WTC11 (cell line): ENCODE measurements at regions of chr22 and their contacts with region 1.

Region 1: GRCh38 chr22:19909350-19910179 is 32.0 kb upstream of the COMT start:
- DNase-seq: peak; percentile 90
- ATAC-seq: peak; percentile 87
- H3K4me3 Mint-ChIP-seq: no peak overlapping the region
- H3K27ac Mint-ChIP-seq: no peak overlapping the region; the same call in 1 of the 2 replicates
- H3K4me1 Mint-ChIP-seq: no peaks in the 10 kb centered on the region; the same call in 1 of the 2 replicates
- H3K27me3 Mint-ChIP-seq: no peaks in the 10 kb centered on the region
- CTCF ChIP-seq: peak; percentile 80

Region 2: DNA sequence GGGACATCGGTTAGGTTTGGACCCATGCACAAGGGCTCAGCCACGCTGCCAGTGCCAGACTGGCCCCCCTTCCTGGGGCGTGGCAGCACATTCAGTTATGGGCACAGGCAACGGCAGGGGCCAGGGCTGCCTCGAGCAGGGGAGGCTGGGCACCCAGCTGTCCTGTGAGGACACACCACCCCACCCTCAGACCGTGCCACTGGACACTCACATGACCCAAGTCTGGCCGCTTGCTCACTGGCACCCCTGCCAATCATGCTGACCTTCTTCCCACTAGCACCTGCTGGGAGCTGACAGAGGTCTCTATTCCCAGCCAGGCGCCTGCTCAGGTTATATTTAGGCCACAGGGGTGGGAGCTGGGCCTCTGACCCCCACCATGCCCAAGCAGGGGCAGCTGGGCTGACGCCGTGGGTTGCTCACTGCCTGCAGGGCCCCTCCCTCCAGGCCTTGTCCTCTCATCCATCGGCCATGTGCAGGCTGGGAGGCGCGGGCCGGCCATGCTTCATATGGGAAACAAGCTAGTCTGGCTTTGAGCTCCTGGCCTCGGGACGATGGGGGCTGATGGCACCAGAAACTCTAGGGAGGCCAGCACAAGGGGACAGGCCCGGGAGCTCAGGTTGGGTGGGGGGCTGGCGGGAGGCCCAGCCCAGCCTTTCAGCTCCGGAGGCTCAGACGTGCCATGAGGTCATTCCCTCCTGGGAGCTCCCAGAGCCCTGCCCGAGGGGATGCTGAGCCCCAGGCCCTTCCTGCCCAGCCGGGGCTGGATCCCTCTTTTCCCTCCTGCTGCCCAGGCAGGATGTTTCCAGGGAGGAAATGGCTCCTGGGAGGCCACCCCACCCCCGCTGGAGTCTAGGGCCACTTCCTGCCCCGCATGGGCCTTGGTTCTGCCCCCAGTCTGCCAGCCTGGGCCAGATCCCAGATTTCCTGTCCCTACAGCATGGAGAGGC is 164.1 kb before region 1 on chr22:
- CTCF ChIA-PET with region 1: interaction called, 14 read pairs
- POLR2A ChIA-PET with region 1: no interaction called
- DNase-seq: no peak
- ATAC-seq: peak; percentile 25; the same call in 1 of the 2 replicates
- H3K4me3 Mint-ChIP-seq: no peak overlapping the region
- H3K27ac Mint-ChIP-seq: no peak overlapping the region
- H3K4me1 Mint-ChIP-seq: 0 out of 2 replicates have a peak, but pooled peaks cover 2% of the 10 kb centered on the region
- H3K27me3 Mint-ChIP-seq: no peaks in the 10 kb centered on the region; the same call in 1 of the 2 replicates
- CTCF ChIP-seq: no peak

Region 3: DNA sequence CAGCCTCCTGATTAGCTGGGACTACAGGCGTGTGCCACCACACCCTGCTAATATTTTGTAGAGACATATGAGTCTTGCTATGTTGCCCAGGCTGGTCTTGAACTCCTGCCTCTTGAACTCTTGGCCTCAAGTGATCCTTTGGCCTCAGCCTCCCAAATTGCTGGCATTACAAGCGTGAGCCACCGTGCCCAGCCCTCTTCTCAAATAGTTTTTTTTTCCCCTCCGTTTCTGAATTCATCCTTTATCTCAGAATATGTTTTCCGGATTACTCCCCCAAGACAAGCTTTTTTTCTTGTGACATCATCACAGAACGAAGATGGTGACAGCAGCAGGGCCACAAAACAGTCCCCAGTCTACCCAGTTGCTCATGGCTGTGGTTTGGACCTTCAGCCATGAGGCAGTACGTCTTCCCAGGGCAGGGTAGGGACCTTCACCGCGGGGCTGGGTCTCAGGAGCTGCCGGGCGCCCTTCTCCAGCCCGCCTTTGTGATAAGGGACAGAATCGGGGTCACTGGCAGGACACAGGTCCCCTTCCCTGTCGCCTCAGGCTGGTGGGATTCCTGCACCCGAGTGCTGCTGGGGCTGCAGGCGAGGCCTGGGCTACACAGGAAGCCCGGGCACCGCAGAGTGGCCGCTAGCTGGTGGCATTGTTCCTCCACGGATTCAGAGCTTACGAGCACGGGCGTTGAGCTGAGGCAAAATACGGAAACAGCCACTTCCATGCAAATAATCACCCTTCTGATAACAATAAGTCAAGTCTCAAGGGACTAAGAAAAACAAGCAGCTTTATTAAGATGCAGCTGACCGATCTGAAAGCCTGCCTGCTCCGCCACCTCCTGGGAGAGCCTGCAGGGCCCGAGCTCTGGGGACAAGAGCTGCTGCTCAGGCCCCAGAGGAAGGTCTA is 136.9 kb before region 1 on chr22:
- CTCF ChIA-PET with region 1: interaction called, 12 read pairs
- POLR2A ChIA-PET with region 1: no interaction called
- DNase-seq: peak; percentile 7
- ATAC-seq: no peak
- H3K4me3 Mint-ChIP-seq: no peak overlapping the region
- H3K27ac Mint-ChIP-seq: no peak overlapping the region
- H3K4me1 Mint-ChIP-seq: peaks cover 5% of the 10 kb centered on the region
- H3K27me3 Mint-ChIP-seq: peaks cover 55% of the 10 kb centered on the region
- CTCF ChIP-seq: no peak

Region 4: DNA sequence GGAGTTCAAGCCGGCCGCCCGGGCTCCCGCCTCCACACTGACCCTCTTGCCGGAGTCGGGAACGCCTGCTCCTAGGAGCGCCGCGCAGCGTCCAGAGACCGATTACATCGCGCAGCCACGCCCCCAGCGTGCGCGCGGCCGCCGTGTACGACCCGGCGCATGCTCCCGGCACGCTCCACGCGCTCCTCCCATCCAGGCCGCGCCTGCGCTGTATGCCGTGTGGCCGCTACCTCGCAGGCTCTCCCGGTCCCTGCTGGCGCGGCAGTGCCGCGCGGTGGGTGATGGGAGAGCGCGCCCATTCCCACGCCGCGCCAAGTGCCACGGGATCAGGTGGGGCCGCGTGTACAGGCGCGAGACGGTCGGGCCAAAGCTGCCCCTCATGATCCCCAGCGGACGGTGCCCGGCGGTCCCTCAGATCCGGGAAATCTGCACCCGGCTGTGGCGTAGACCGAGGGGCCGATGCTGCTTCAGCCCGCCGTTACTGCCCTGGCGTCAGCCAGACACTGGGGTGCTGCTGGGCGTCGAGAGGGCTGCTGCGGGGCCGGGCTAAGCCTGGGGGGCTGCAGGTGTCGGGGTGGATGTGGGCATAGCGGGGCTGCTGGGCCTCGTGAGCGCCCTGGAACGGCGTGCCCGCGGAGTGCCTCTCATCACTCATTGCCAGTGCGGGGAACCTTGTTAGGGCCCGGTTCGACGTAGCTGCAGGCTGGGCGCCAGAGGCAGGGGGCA is 54.6 kb before region 1 on chr22 and contains the starts of genes GNB1L and RTL10:
- CTCF ChIA-PET with region 1: interaction called, 10 read pairs
- POLR2A ChIA-PET with region 1: no interaction called
- DNase-seq: peak; percentile 95
- ATAC-seq: peak; percentile 90
- H3K4me3 Mint-ChIP-seq: peak within 1 kb of the TSS; percentile 88
- H3K27ac Mint-ChIP-seq: peak within 1 kb of the TSS; percentile 21
- H3K4me1 Mint-ChIP-seq: peaks cover 37% of the 10 kb centered on the region
- H3K27me3 Mint-ChIP-seq: no peaks in the 10 kb centered on the region
- CTCF ChIP-seq: no peak
- total RNA-seq, gene GNB1L: 18.0 to 21.7 TPM (median 19.4 TPM) in 3 replicates
- total RNA-seq, gene RTL10: 19.2 to 21.5 TPM (median 20.6 TPM) in 3 replicates

Region 5: DNA sequence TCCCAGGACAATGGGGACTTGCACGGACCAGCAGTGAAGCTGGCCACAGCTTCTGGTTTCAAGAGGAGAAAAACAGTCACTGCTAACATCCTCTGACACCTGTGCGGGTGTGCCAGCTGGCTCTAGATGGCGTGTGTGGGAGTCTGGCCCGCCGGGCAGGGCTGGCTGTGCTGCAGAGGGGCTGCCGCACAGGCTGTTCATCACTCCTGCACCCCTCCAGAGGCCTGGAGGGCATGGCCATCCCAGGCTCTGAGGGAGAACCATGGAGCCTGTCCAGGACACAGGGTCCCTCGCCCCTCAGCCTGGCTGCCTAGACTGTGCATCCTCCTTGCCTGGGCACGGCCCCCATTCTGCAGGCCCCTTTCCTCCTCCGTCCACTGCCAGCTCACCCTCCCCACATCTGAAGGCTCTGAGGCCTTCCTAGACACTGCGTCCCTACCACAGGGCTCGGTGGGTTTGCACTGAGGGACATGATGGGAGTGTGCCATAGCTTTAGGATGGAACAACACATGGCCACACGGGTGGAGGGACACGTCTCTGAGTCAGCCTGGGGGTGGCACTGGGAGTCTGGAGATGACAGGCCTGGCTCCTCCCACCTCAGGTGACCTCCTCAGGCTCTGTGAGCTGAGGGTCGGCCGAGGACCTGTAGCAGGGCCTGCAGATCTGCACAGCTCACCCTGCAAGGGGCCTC is 12.8 kb before region 1 on chr22:
- CTCF ChIA-PET with region 1: interaction called, 25 read pairs
- POLR2A ChIA-PET with region 1: no interaction called
- DNase-seq: no peak
- ATAC-seq: peak; percentile 12
- H3K4me3 Mint-ChIP-seq: no peak overlapping the region
- H3K27ac Mint-ChIP-seq: 0 out of 2 replicates have a peak overlapping the region, but pooled peaks have one; percentile 87
- H3K4me1 Mint-ChIP-seq: peaks cover 13% of the 10 kb centered on the region
- H3K27me3 Mint-ChIP-seq: no peaks in the 10 kb centered on the region; the same call in 1 of the 2 replicates
- CTCF ChIP-seq: no peak

Region 6: GRCh38 chr22:19941365-19942082 is 32.0 kb after region 1 on chr22 and contains the starts of genes COMT and TXNRD2:
- CTCF ChIA-PET with region 1: interaction called, 12 read pairs
- POLR2A ChIA-PET with region 1: no interaction called
- DNase-seq: peak; percentile 61
- ATAC-seq: peak; percentile 82
- H3K4me3 Mint-ChIP-seq: peak within 1 kb of the TSS; percentile 78
- H3K27ac Mint-ChIP-seq: peak within 1 kb of the TSS; percentile 91
- H3K4me1 Mint-ChIP-seq: peaks cover 22% of the 10 kb centered on the region
- H3K27me3 Mint-ChIP-seq: peaks cover 3% of the 10 kb centered on the region
- CTCF ChIP-seq: no peak
- total RNA-seq, gene COMT: 30.8 to 38.0 TPM (median 36.1 TPM) in 3 replicates
- total RNA-seq, gene TXNRD2: 15.9 to 18.8 TPM (median 18.8 TPM) in 3 replicates

Region 7: DNA sequence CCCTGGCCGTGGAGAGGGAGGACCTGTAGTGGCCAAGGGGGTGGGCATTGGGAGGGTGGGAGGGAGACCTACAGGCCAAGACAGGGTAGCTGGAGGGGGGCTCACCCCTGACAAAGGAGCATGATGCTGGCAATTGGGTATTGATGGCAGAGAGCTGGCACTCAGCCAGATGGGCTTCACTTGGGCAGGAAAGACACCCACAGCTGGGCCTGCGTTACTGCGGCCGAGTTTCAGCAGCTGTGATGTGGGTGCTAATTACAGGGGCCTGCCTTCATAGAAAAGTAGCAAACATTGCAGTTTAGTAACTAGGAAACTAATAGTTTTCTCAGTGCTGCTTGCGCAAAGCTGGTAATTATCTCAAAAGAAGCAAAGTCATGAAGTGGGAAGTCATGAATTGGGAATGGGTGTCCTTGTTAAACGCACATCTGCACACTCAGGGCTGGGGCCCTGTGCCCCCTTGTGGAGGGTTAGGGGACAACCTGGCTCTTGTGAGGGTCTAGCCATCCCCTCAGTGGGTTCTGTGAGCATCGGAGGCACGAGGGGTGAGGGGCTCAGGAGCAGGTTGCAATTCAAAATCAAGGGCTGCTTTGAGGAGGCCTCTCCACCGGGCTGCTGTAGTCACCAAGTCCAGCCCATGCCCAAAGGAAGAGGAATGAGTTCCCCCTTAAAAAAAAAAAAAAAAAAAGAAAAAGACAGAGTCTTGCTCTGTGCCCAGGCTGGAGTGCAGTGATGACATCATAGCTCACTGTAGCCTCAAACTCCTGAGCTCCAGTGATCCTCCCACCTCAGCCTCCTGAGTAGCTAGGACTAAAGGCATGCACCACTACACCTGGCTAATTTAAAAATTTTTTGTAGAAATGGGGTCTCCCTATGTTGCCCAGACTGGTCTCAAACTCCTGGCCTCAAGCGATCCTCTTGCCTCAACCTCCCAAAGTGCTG is 56.5 kb after region 1 on chr22:
- CTCF ChIA-PET with region 1: no interaction called
- POLR2A ChIA-PET with region 1: no interaction called
- DNase-seq: peak; percentile 68
- ATAC-seq: peak; percentile 25
- H3K4me3 Mint-ChIP-seq: no peak overlapping the region
- H3K27ac Mint-ChIP-seq: no peak overlapping the region
- H3K4me1 Mint-ChIP-seq: peaks cover 22% of the 10 kb centered on the region
- H3K27me3 Mint-ChIP-seq: no peaks in the 10 kb centered on the region; the same call in 1 of the 2 replicates
- CTCF ChIP-seq: peak; percentile 51; the same call in 1 of the 2 replicates

Region 8: GRCh38 chr22:20066617-20067383 is 157.2 kb after region 1 on chr22:
- CTCF ChIA-PET with region 1: no interaction called
- POLR2A ChIA-PET with region 1: no interaction called
- DNase-seq: no peak
- ATAC-seq: no peak
- H3K4me3 Mint-ChIP-seq: no peak overlapping the region
- H3K27ac Mint-ChIP-seq: no peak overlapping the region
- H3K4me1 Mint-ChIP-seq: no peaks in the 10 kb centered on the region
- H3K27me3 Mint-ChIP-seq: peaks cover 15% of the 10 kb centered on the region
- CTCF ChIP-seq: no peak